Activated T-helper 1 cell treated with anti-CD3 and anti-CD28 coated beads, Interleukin-12 subunit alpha, Interleukin-12 subunit beta, Interleukin-2, Interleukin-4 antibody, amounts not matched to agents 30 ng/mL and 10 ng/mL and 1 ng/mL, durations not matched to agents 14 hours and 24 hours and 36 hours (primary cell): ENCODE measurements at regions of chr14 and their contacts with region 1.

Region 1: GRCh38 chr14:69059658-69060623 is 80.8 kb upstream of the ACTN1 start:
- DNase-seq: no peak
- H3K4me3 Mint-ChIP-seq: no peak overlapping the region
- H3K27ac Mint-ChIP-seq: no peak overlapping the region
- H3K4me1 Mint-ChIP-seq: peaks cover 16% of the 10 kb centered on the region
- H3K27me3 Mint-ChIP-seq: no peaks in the 10 kb centered on the region

Region 2: DNA sequence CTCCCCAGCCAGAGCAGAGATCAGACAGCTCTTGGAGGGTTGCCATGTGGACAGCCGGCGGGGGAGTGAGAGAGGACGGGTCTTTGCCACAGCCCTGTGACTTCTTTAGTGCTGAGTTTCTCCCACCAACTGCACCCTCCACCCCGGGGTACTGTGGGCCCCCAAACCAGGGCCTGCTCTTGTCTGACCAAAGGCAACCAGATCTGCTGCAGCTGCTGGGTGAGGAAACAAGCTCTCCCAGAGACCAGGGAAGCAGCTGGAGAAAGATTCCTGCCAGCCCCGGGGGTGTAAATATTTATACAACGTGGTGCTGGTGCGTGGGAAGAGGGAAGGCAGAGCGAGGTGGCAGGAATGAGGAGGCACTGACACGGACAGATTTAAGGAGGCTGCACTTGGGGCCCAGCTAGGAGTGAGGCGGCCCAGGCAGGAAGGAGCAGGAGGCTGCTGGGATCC is 252.8 kb before region 1 on chr14:
- intact Hi-C with region 1: no loop called
- DNase-seq: no peak
- H3K4me3 Mint-ChIP-seq: no peak overlapping the region
- H3K27ac Mint-ChIP-seq: no peak overlapping the region
- H3K4me1 Mint-ChIP-seq: peaks cover 15% of the 10 kb centered on the region
- H3K27me3 Mint-ChIP-seq: peaks cover 4% of the 10 kb centered on the region

Region 3: DNA sequence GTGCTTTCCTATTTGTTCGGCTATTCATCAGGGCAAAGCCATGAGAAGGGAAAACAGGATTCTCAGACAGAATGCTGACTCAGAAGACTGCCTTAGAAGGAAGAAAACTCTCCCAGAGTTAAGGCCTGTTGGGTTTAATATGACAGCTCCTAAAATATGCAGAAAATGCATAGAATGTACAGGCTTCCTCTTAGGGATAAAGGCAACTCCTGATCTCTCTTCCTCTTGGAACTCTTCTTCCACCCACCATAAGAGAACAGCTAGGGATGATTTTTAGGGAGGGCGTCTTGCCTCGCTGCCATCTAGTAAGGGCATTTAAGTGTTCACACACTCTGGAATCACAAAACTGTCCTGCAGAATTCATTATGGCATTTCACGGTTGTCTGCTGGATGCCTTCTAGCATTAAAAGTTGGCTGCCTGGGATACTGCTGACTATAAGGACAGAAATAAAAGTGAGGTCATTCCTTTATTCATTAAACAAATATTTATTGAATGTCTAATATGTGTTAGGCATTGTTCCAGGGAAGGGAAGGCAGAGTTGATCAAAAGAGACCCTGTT is 19.3 kb after region 1 on chr14:
- intact Hi-C with region 1: no loop called
- DNase-seq: no peak
- H3K4me3 Mint-ChIP-seq: no peak overlapping the region
- H3K27ac Mint-ChIP-seq: no peak overlapping the region
- H3K4me1 Mint-ChIP-seq: peaks cover 6% of the 10 kb centered on the region
- H3K27me3 Mint-ChIP-seq: no peaks in the 10 kb centered on the region

Region 4: DNA sequence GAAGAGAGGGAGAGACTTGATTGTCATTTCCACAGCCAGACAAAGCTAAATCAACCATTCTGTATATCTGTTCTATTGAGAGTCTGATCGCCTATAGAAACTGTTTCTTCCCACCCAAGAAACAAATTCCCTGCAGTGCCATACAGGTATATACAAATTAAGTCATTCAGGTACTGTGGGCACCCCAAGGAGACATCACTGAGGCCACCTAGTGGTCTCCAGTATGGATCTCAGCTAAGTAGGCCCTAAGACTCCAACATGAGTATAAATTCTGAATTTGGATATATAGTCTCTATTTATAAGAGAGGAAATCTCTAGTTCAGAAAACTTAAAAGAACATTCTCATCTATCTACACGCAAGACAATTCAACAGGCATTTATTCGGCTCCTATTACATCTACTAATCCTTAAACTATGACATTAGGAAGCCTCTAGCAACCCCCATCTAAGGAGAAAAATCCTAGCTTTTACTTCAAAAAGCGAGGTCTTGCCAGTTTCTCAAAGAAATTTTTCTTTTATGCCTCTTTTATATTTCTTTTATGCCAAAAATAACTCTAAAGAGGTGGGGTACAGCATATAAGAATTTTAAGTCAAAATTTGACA is 30.3 kb after region 1 on chr14:
- intact Hi-C with region 1: loop called (anchors 1 kb)
- DNase-seq: no peak
- H3K4me3 Mint-ChIP-seq: no peak overlapping the region
- H3K27ac Mint-ChIP-seq: no peak overlapping the region
- H3K4me1 Mint-ChIP-seq: peaks cover 21% of the 10 kb centered on the region
- H3K27me3 Mint-ChIP-seq: no peaks in the 10 kb centered on the region

Region 5: DNA sequence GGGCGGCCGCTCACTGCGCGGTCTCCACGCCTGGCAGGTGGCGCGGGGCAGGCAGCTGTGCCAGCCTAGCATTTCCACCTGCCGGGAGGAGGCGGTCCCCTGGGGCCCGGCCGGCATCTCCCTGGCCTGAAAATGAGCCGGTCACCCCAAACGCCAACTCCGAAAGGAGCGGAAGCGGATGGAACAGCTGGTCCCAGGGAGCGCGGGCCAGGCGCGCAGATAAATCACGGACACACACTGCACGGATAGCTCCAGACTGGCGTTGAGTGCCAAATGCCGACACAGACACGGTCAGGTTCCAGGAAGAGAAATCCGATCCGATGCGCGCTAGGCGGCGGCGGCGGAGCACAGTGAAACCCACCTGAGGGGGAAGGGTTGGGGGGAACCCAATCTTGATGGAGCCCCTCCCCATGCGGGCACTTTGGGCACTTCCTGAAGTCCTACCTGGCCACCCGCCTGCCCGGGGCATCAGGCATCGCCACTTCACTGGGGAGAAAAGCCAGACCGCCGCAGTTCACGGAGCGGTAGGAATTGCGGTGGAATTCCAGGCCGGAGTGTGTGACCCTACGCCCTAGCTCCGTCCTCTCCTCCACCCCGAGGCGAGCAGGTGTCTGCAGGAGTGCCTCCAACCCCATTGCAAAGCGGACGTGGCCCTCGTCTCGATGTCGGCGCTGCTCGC is 424.0 kb after region 1 on chr14:
- intact Hi-C with region 1: no loop called
- DNase-seq: no peak
- H3K4me3 Mint-ChIP-seq: no peak overlapping the region
- H3K27ac Mint-ChIP-seq: no peak overlapping the region
- H3K4me1 Mint-ChIP-seq: no peaks in the 10 kb centered on the region
- H3K27me3 Mint-ChIP-seq: peaks cover 38% of the 10 kb centered on the region